Cardiac septum (tissue), 1 donor: ENCODE measurements at regions of chr4 and their contacts with region 1.

Region 1: GRCh38 chr4:80202190-80202711 is 4.9 kb downstream of the PRDM8 start:
- DNase-seq: peak; percentile 95

Region 2: GRCh38 chr4:78951862-78952472 is 1250.3 kb before region 1 on chr4:
- intact Hi-C with region 1: loop called (anchors 5 kb)
- DNase-seq: no peak

Region 3: GRCh38 chr4:79588689-79589088 is 613.6 kb before region 1 on chr4:
- intact Hi-C with region 1: loop called (anchors 10 kb)
- DNase-seq: no peak

Region 4: DNA sequence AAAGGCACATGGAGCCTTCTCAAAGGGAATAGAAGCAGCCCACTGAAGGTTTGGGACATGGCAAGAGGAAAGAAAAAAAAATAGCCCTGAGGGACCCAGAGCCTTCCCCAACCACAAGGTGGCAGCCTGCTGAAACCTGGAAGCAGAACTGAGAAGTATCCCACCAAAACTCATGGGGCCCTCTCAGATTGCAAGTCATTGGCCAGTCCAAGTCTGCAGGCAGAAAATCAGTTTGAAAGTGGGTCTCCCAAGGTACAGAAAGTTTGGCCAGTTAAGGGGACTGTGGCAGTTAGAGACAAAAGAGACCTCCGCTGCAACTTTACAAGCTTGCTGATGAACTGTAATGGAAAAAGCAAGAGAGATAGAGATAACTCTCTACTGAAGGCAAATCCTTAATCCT is 285.0 kb before region 1 on chr4:
- intact Hi-C with region 1: loop called (anchors 10 kb)
- DNase-seq: no peak

Region 5: DNA sequence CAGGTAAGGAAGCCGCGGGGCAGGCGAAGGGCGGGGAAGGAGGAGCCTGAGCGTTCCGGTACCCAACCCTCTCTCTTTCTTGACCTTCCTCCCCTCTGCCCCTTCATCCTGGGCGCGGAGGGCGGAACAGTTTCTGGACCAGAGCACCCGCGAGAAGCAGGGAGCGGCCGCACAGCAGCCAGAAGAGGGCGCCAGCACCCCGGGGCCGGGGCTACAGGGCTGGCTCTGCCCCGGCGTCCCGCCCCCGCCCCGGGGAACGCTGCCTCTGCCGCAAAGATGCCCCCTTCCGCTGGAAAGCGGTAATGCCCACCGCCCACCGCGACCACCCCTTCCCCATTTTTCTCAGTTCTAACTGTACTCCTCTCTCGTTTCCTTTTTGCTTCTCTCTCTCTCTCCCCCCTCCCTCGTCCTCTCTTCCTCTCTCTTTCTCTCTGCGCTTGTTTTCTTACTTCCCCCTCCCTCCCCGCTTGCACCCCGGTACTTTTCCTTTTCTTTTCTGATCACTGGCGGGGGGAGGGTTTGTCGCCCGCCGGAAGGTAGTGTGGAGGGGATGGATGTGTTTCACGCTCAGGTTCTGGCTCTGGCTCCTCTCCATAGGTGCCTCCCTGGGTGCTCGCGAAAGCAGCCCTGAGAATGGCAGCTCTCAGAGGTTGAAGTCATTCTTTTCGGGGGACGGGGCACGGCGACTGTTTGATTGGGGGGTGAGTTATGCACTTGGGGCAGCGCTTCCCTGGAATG is 18.0 kb before region 1 on chr4:
- intact Hi-C with region 1: loop called (anchors 2 kb)
- DNase-seq: peak; percentile 95

Region 6: GRCh38 chr4:80678413-80678812 is 476.2 kb after region 1 on chr4:
- intact Hi-C with region 1: no loop called
- DNase-seq: no peak